Ascending aorta (tissue), 2 donors: ENCODE measurements at regions of chr3 and their contacts with region 1.

Region 1: DNA sequence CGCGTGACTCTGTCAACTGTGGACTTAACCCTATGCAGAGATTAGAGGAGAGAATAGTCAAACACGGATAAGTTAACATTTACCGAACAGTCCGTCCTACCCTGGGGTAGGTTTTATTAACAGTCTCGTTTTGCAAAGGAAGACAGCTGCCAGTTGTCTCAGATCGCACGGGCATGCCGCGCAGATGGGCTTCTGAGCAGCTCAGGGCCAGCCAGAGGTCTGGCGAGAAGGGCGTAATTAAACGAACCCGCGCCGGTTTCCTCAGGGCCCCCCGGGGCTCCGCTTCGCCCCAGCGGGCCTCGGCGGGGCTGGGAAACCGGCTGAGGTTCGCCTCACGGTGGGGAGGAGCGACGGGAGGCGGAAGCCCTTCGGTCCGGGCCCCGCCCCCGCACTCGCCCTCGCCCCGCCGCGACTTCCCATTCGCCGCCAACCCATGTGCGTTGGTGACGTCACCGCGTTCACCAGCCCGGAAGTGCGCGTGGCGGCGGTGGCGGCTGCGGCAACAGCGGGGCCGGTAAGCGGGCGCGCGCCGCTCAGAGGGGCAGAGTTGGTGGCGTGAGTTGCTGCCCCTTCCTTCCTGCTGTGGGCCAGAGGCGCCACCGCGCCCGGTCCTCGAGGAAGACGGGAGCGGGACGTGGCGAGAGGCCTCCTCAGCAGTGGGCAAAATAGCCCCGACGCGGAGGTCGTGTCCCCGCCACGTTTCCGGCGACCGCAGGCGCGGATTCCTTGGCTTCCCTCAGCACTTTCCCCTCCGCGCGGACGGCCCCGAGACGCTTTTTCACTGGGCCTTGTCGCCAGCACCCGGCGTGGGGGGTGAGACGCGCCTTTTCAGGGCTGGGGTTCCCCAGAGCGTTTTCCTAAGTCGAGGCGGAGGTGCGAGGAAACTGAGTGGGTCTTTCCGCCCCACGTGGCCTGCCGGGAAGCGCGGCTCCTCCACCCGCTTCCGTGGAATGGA is at the start of gene TRNT1:
- DNase-seq: peak; percentile 78 to 97
- H3K4me3 ChIP-seq: peak within 1 kb of the TSS; percentile 90 to 97
- H3K27ac ChIP-seq: peak within 1 kb of the TSS; percentile 91 to 98
- H3K4me1 ChIP-seq: peaks cover 0 to 12% of the 10 kb centered on the region in 2 donors
- H3K27me3 ChIP-seq: no peaks in the 10 kb centered on the region
- CTCF ChIP-seq: no peak
- total RNA-seq, gene TRNT1: 16.4 TPM

Region 2: GRCh38 chr3:2098398-2099027 is 1028.2 kb before region 1 on chr3 and contains the start of gene CNTN4:
- intact Hi-C with region 1: loop called (anchors 10 kb)
- DNase-seq: peak; percentile 23 to 88
- H3K4me3 ChIP-seq: peak within 1 kb of the TSS; percentile 51 to 77
- H3K27ac ChIP-seq: peak within 1 kb of the TSS; percentile 82 to 93
- H3K4me1 ChIP-seq: no peaks in the 10 kb centered on the region
- H3K27me3 ChIP-seq: no peaks in the 10 kb centered on the region
- CTCF ChIP-seq: peak; percentile 32 to 57 (median 47)
- total RNA-seq, gene CNTN4: 37.5 TPM

Region 3: DNA sequence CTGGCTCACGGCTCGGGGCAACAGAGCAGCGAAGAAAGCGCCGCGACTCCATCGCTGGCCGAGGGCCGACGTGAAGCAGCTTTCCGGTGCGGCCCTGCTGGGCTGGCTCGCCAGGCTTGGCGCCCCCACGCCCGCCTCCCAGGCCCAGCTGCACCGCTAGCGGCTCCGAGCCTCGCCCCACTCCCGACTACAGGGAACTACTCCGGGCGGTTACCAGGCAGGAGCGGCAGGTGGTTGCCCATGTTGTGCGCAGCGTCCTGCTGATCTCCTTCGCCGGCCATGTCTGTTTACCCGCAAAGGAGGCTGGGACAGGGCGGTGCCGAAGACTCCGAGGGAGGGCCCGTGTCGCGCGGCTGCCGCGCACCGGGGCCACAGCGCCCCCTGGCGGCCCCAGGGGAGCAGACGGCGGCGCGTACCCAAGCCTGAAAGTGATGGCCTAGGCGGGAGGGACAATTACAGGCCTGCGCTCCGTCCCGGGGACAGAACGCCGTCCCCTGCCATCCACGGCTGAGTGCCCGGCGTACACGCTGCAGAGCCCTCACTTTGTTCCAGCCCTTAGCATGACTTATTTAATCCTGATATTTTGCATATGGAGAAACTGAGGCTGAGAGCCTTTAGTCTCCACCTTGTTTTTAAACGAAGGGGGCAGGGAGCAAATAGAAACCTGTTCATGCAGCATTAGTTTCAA is 52.8 kb after region 1 on chr3 and contains the start of gene CRBN:
- intact Hi-C with region 1: loop called (anchors 2 kb)
- DNase-seq: peak; percentile 46 to 92
- H3K4me3 ChIP-seq: peak within 1 kb of the TSS; percentile 78 to 88
- H3K27ac ChIP-seq: peak within 1 kb of the TSS; percentile 74 to 75
- H3K4me1 ChIP-seq: peaks cover 6 to 18% of the 10 kb centered on the region in 2 donors
- H3K27me3 ChIP-seq: no peaks in the 10 kb centered on the region
- CTCF ChIP-seq: peak; percentile 95 to 100 (median 98)
- total RNA-seq, gene CRBN: 114 TPM